ENCODE measurements at regions of chr17 and their contacts with region 1.

Region 1: GRCh38 chr17:700504-701094 is 14.0 kb downstream of the VPS53 start:
- DNase-seq: no peak
- H3K4me3 ChIP-seq: no peak overlapping the region
- H3K27ac ChIP-seq: no peak overlapping the region
- H3K27me3 ChIP-seq: no peaks in the 10 kb centered on the region
- CTCF ChIP-seq: peak; percentile 59

Region 2: GRCh38 chr17:385926-386876 is 314.4 kb before region 1 on chr17:
- CTCF ChIA-PET with region 1: interaction called, 16 read pairs
- POLR2A ChIA-PET with region 1: no interaction called
- DNase-seq: no peak
- H3K4me3 ChIP-seq: peak overlapping the region; percentile 48; the same call in 1 of the 2 replicates
- H3K27ac ChIP-seq: no peak overlapping the region
- H3K27me3 ChIP-seq: peaks cover 13% of the 10 kb centered on the region
- CTCF ChIP-seq: peak; percentile 45

Region 3: DNA sequence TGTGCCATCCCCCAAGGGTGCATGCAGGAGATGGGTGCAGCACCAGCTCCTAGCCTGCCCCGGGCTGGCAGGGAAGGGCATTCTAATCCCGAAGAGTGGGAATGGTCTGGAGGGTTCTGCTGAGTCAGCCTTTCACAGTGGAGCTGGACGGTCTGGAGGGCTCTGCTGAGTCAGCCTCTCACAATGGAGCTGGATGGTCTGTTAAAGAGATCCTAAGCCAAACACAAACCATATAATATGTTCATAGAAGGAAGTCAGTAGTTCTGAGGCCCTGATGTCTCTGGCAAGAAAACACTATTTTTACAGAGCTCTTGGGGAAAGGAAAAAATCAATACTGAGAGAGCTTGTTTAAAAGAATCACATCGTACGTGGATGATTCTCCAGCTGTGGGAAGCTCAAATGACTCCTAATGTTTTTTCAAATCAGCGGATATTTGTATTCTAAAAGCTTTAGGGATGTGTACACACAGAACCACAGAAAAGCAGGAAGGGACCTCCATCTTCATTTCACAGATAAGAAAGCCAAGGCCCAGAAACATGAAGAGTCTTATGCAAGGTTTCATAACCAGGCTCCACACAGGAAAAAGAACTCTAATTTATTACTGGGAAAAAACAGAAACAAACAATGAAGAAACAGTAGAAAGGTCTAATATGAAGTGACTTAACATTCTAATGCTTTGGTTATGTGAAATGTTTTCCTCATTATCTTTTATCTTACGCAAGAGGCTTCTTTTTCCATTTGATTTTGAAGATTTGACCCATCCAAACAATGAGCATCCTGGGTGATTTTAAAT is 162.2 kb before region 1 on chr17:
- CTCF ChIA-PET with region 1: interaction called, 10 read pairs
- POLR2A ChIA-PET with region 1: no interaction called
- DNase-seq: peak; percentile 34
- H3K4me3 ChIP-seq: no peak overlapping the region
- H3K27ac ChIP-seq: peak overlapping the region; percentile 90
- H3K27me3 ChIP-seq: no peaks in the 10 kb centered on the region
- CTCF ChIP-seq: no peak

Region 4: GRCh38 chr17:606508-607250 is 93.9 kb before region 1 on chr17:
- CTCF ChIA-PET with region 1: interaction called, 11 read pairs
- POLR2A ChIA-PET with region 1: no interaction called
- DNase-seq: no peak
- H3K4me3 ChIP-seq: no peak overlapping the region
- H3K27ac ChIP-seq: no peak overlapping the region
- H3K27me3 ChIP-seq: no peaks in the 10 kb centered on the region
- CTCF ChIP-seq: no peak

Region 5: DNA sequence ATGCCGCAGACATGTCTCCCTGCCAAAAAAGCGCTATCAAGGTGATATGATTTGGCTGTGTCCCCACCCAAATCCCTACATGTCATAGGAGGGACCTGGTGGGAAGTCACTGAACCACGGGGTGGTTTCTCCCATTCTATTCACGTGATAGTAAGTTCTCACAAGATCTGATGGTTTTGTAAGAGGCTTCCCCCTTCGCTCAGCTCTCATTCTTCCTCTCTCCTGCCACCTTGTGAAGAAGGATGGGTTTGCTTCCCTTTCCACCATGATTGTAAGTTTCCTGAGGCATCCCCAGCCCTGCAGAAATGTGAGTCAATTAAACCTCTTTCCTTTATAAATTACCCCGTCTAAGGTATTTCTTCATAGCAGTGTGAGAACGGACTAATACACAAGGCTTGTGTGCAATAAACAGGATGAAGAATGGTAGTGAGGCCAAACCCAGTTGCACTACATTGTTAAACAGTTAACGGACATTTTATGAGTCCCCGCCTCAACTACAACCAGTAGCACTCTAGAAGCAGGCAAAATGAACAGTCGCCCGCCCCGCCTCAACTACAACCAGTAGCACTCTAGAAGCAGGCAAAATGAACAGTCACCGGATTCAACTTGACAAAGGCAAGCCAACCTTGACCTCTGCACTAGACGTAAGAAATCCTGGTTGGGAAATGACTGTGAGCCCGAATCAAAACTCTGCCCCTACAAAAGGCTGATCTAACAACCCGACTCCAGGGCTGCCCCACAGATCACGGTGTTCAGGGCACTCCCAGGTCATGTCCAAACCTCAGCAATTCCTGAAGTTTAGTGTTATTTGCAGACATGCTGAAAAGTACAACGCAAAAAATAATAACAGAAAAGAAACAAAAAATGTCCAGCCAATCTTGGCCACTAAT is 12.3 kb before region 1 on chr17:
- CTCF ChIA-PET with region 1: interaction called, 14 read pairs
- POLR2A ChIA-PET with region 1: interaction called, 3 read pairs
- DNase-seq: no peak
- H3K4me3 ChIP-seq: no peak overlapping the region
- H3K27ac ChIP-seq: no peak overlapping the region
- H3K27me3 ChIP-seq: no peaks in the 10 kb centered on the region
- CTCF ChIP-seq: peak; percentile 30; the same call in 1 of the 2 replicates

Region 6: GRCh38 chr17:716238-716637 is 15.6 kb after region 1 on chr17:
- CTCF ChIA-PET with region 1: interaction called, 15 read pairs
- POLR2A ChIA-PET with region 1: no interaction called
- DNase-seq: no peak
- H3K4me3 ChIP-seq: no peak overlapping the region
- H3K27ac ChIP-seq: no peak overlapping the region
- H3K27me3 ChIP-seq: no peaks in the 10 kb centered on the region
- CTCF ChIP-seq: no peak

Region 7: GRCh38 chr17:752002-752619 is 51.5 kb after region 1 on chr17 and contains the start of gene GEMIN4:
- CTCF ChIA-PET with region 1: no interaction called
- POLR2A ChIA-PET with region 1: no interaction called
- DNase-seq: peak; percentile 65
- H3K4me3 ChIP-seq: peak within 1 kb of the TSS; percentile 71
- H3K27ac ChIP-seq: peak within 1 kb of the TSS; percentile 39
- H3K27me3 ChIP-seq: no peaks in the 10 kb centered on the region
- CTCF ChIP-seq: peak; percentile 91
- polyA plus RNA-seq, gene GEMIN4: 9.3 and 13.6 TPM in 2 replicates